Mammary epithelial cell (primary cell): ENCODE measurements at regions of chr7 and their contacts with region 1.

Region 1: GRCh38 chr7:29345600-29345999 is 151.0 kb downstream of the CHN2 start:
- DNase-seq: peak; percentile 29
- H3K4me3 ChIP-seq: no peak overlapping the region
- H3K27ac ChIP-seq: no peak overlapping the region
- H3K4me1 ChIP-seq: peaks cover 36% of the 10 kb centered on the region
- H3K27me3 ChIP-seq: no peaks in the 10 kb centered on the region
- CTCF ChIP-seq: peak; percentile 52 to 73

Region 2: DNA sequence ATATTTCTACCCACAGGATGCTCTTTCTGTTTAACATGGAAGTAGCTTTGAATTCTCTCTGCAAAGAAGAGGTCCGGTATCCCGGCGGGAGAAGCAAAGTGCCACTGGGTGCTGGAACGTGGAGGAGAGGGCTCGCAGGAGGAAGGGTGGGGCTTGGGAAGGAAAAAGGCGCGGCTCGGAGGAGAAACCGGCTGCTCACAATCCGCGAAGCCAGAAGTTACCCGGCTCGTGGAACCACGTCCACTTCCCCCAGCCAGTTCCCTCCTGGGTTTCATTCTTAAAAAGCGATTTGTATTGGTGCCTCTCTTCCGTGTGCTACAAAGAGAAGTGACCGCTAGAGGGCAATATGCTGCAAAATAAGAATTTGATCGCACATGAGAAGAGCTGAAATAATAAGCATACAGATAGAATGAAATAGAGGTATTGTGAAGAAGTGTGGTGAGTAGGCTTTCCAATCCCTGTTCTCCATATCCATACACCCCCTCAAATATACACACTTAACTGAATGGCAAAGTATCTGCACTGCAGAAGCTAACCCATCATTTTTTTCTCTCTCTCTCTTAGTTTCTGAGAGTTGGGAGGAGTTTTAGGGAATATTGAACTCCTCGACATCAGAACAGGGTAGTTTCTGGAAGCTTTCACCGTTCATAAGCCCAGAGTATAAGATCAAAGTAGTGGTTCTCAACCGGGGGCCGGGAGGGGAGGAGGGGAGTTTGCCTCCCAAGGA is 418.6 kb before region 1 on chr7:
- CTCF ChIA-PET with region 1: interaction called, 3 read pairs
- dilution Hi-C with region 1: no loop called
- in situ Hi-C with region 1: loop called in 1 of 2 experiments (anchors 10 kb)
- intact Hi-C with region 1: loop called (anchors 1 kb)
- DNase-seq: peak; percentile 74
- H3K4me3 ChIP-seq: peak overlapping the region; percentile 52 to 59 (median 58)
- H3K27ac ChIP-seq: no peak overlapping the region
- H3K4me1 ChIP-seq: peaks cover 5% of the 10 kb centered on the region
- H3K27me3 ChIP-seq: no peaks in the 10 kb centered on the region
- CTCF ChIP-seq: peak; percentile 76 to 77

Region 3: GRCh38 chr7:29113384-29114103 is 232.1 kb before region 1 on chr7:
- CTCF ChIA-PET with region 1: no interaction called
- dilution Hi-C with region 1: no loop called
- in situ Hi-C with region 1: no loop called
- intact Hi-C with region 1: loop called (anchors 1 kb)
- DNase-seq: peak; percentile 91
- H3K4me3 ChIP-seq: peak overlapping the region in 1 of 3 experiments; percentile 32
- H3K27ac ChIP-seq: peak overlapping the region; percentile 53
- H3K4me1 ChIP-seq: peaks cover 54% of the 10 kb centered on the region
- H3K27me3 ChIP-seq: no peaks in the 10 kb centered on the region
- CTCF ChIP-seq: peak; percentile 44 to 58

Region 4: DNA sequence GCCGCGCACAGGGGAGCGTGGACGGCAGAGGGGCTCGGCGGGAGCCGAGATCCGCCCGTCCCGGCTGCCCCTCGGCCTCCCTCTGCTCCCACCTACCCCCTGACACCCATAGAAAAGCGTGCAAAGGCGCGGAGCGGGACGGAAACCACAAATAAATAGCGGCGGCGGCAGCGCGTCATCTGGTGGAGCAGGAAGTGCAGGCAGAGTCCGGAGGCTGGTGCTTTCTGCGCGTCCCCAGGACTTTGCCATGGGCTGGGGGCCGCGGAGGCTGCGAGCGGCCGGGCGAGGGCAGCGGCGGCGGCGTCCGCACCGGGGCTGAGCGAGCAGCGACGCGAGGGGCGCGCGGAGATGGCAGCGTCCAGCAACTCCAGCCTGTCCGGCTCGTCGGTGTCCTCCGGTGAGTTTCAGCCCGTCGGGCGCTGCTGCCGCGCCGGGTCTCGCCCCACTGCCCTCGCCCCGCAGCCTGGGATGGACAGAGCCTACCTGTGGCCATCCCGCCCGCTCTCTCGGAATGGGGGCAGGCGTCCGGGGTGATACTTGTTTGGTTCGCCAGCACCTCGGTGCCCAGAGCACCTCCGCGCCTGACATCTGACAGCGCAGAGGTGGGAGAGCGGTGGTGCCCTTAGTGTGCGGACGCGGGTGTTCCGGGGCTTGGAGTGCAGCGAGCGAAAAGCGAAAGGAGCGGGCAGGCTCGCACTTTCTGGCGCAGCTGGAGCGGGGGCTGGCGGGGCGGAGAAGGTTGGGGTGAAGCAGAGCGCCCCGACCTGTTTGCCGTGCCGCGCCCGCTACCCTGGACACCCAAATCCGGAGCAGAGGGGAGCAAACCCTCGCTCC is 150.8 kb before region 1 on chr7 and contains the start of gene CHN2:
- CTCF ChIA-PET with region 1: interaction called, 6 read pairs
- dilution Hi-C with region 1: no loop called
- in situ Hi-C with region 1: no loop called
- intact Hi-C with region 1: loop called (anchors 1 kb)
- DNase-seq: peak; percentile 37
- H3K4me3 ChIP-seq: peak within 1 kb of the TSS; percentile 59 to 66 (median 66)
- H3K27ac ChIP-seq: no peak within 1 kb of the TSS
- H3K4me1 ChIP-seq: peaks cover 10% of the 10 kb centered on the region
- H3K27me3 ChIP-seq: peaks cover 10% of the 10 kb centered on the region
- CTCF ChIP-seq: no peak
- total RNA-seq, gene CHN2: not detected

Region 5: DNA sequence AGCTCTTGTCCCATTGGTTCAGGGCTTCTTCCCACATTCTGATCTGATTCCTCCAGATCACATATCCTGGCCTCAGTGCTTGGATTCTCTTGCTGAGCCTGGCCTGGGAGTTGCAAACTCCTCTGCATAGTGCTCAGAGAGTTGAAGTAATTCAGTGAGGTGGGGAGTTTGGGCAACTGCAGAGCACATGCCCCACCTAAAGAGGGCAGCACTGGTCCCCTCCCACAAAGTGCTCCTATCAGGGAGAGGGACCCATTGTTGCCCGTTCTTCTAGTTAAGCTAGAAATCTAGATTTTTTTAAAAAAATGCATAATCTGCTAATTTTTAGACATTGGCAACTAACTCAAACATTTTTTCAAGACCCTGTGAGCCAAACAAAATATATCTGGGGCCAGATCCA is 106.0 kb before region 1 on chr7:
- CTCF ChIA-PET with region 1: no interaction called
- dilution Hi-C with region 1: no loop called
- in situ Hi-C with region 1: no loop called
- intact Hi-C with region 1: loop called (anchors 1 kb)
- DNase-seq: no peak
- H3K4me3 ChIP-seq: no peak overlapping the region
- H3K27ac ChIP-seq: no peak overlapping the region
- H3K4me1 ChIP-seq: no peaks in the 10 kb centered on the region
- H3K27me3 ChIP-seq: no peaks in the 10 kb centered on the region
- CTCF ChIP-seq: peak; percentile 79 to 87

Region 6: GRCh38 chr7:29285444-29285793 is 60.2 kb before region 1 on chr7:
- CTCF ChIA-PET with region 1: no interaction called
- dilution Hi-C with region 1: no loop called
- in situ Hi-C with region 1: no loop called
- intact Hi-C with region 1: loop called (anchors 5 kb)
- DNase-seq: peak; percentile 97
- H3K4me3 ChIP-seq: no peak overlapping the region
- H3K27ac ChIP-seq: peak overlapping the region; percentile 60
- H3K4me1 ChIP-seq: peaks cover 48% of the 10 kb centered on the region
- H3K27me3 ChIP-seq: no peaks in the 10 kb centered on the region
- CTCF ChIP-seq: no peak

Region 7: DNA sequence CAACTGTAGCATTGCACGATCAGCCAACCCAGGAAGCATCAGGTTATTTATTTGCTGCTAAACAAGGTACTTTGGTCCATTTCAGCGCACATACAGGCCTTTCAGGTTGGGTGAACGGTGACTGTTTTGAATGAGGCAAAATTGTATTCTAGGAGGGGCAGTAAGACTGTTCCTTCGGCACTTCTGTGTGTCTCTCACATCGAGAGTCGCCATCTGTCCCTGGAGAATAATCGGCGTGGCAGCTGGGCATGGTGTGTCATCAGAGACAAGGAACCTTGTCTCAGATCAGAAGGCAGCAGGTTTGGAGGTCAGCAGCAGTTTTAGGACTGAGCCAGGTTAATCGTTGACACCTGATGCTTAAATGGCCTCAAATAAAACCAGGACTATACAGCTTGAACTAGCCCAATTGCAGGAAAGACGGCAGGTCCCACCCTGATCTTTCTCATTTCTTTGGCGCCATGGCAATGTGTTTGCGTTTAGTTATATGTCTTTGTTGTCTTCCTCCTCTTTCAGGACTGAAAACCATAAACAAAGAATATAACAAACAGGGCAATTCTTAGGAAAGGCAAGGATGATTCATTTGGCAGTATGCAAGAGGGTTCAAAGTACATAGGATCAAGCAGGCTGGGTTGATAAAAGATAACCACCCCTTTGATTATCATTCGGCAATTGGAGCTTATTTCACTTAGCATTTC is 126.0 kb after region 1 on chr7:
- CTCF ChIA-PET with region 1: no interaction called
- dilution Hi-C with region 1: no loop called
- in situ Hi-C with region 1: no loop called
- intact Hi-C with region 1: no loop called
- DNase-seq: no peak
- H3K4me3 ChIP-seq: no peak overlapping the region
- H3K27ac ChIP-seq: no peak overlapping the region
- H3K4me1 ChIP-seq: no peaks in the 10 kb centered on the region
- H3K27me3 ChIP-seq: no peaks in the 10 kb centered on the region
- CTCF ChIP-seq: no peak

Region 8: GRCh38 chr7:29548823-29549222 is 203.2 kb after region 1 on chr7:
- CTCF ChIA-PET with region 1: no interaction called
- dilution Hi-C with region 1: no loop called
- in situ Hi-C with region 1: no loop called
- intact Hi-C with region 1: no loop called
- DNase-seq: peak; percentile 51
- H3K4me3 ChIP-seq: no peak overlapping the region
- H3K27ac ChIP-seq: no peak overlapping the region
- H3K4me1 ChIP-seq: no peaks in the 10 kb centered on the region
- H3K27me3 ChIP-seq: no peaks in the 10 kb centered on the region
- CTCF ChIP-seq: no peak

Region 9: GRCh38 chr7:29609162-29610037 is 263.8 kb after region 1 on chr7:
- CTCF ChIA-PET with region 1: interaction called, 11 read pairs
- dilution Hi-C with region 1: no loop called
- in situ Hi-C with region 1: no loop called
- intact Hi-C with region 1: no loop called
- DNase-seq: peak; percentile 79
- H3K4me3 ChIP-seq: no peak overlapping the region
- H3K27ac ChIP-seq: no peak overlapping the region
- H3K4me1 ChIP-seq: peaks cover 55% of the 10 kb centered on the region
- H3K27me3 ChIP-seq: no peaks in the 10 kb centered on the region
- CTCF ChIP-seq: peak; percentile 86 to 94